HCT116 (cell line): ENCODE measurements at regions of chr10 and their contacts with region 1.

Region 1: GRCh38 chr10:4918236-4918635 is 45.0 kb upstream of the AKR1C1 start:
- DNase-seq: no peak
- ATAC-seq: no peak
- H3K4me3 ChIP-seq: no peak overlapping the region
- H3K27ac ChIP-seq: no peak overlapping the region
- H3K4me1 ChIP-seq: no peaks in the 10 kb centered on the region
- H3K27me3 ChIP-seq: no peaks in the 10 kb centered on the region
- CTCF ChIP-seq: no peak
- POLR2A ChIP-seq: no peak
- RAD21 ChIP-seq: no peak

Region 2: GRCh38 chr10:4867520-4868356 is 50.5 kb before region 1 on chr10:
- CTCF ChIA-PET with region 1: no interaction called
- POLR2A ChIA-PET with region 1: no interaction called
- RAD21 ChIA-PET with region 1: no interaction called
- intact Hi-C with region 1: loop called (anchors 5 kb)
- DNase-seq: no peak
- ATAC-seq: no peak
- H3K4me3 ChIP-seq: no peak overlapping the region
- H3K27ac ChIP-seq: no peak overlapping the region
- H3K4me1 ChIP-seq: no peaks in the 10 kb centered on the region
- H3K27me3 ChIP-seq: no peaks in the 10 kb centered on the region
- CTCF ChIP-seq: no peak
- POLR2A ChIP-seq: no peak
- RAD21 ChIP-seq: no peak